ENCODE measurements at regions of chr19 and their contacts with region 1.

Region 1: GRCh38 chr19:42325273-42325895 is at the start of gene MEGF8:
- DNase-seq: peak; percentile 98
- ATAC-seq: peak; percentile 92
- H3K4me3 ChIP-seq: peak within 1 kb of the TSS; percentile 93
- H3K27ac ChIP-seq: peak within 1 kb of the TSS; percentile 57
- H3K4me1 ChIP-seq: peaks cover 7% of the 10 kb centered on the region
- H3K27me3 ChIP-seq: peaks cover 3 to 4% of the 10 kb centered on the region in 2 experiments; a peak in 2 of 4 replicates
- CTCF ChIP-seq: peak; percentile 90 to 97 (median 95); a peak in 5 of 6 replicates
- EP300 ChIP-seq: no peak
- POLR2A ChIP-seq: peak; percentile 85
- RAD21 ChIP-seq: peak; percentile 72
- polyA plus RNA-seq, gene MEGF8: 0.43 to 0.75 TPM

Region 2: DNA sequence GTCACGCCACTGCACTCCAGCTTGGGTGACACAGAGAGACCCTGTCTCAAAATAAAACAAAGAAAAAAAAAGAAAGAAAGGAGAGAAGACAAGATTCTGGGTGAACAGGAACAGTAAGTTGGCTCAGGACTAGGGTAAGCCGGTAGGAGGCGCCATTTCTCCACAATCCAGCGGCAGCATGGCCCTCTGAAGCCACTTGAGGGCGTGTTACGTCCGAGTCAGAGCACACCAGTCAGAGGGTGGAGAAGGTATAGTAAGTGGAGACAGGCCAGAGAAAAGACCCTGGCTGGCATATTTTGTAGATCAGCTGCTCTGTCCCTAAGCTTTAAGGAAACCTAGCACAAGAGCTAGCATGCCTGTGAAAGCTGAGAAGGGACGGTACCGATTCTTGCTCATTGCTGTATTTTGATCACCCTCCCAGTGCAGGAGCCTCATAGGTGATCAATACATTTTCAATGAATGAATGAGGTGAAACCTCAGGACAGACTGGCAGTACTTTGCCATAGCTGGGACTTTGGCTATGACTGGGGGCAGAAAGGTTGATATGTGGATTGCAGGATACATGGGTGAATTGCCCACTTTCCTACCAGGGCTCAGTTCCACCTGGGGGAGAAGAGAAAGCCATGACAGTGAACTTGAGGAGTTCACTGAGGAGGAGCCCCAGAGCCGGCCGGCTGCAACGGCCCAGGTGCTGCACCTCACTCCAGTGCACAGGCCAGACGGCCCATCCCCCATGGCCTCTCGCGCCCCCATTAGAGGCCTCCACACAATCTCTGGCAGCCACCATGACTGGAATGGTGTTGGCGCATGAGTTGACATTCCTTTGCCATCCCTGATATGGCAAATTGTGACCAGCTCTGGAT is 216.6 kb before region 1 on chr19:
- CTCF ChIA-PET with region 1: interaction called, 4 read pairs
- POLR2A ChIA-PET with region 1: no interaction called
- RAD21 ChIA-PET with region 1: no interaction called
- SMC1A ChIA-PET with region 1: interaction called, 3 read pairs
- in situ Hi-C with region 1: no loop called
- intact Hi-C with region 1: loop called (anchors 10 kb)
- DNase-seq: peak; percentile 72
- ATAC-seq: peak; percentile 99
- H3K4me3 ChIP-seq: no peak overlapping the region
- H3K27ac ChIP-seq: no peak overlapping the region
- H3K4me1 ChIP-seq: peaks cover 31% of the 10 kb centered on the region
- H3K27me3 ChIP-seq: no peaks in the 10 kb centered on the region
- CTCF ChIP-seq: peak; percentile 100; a peak in 5 of 6 replicates
- EP300 ChIP-seq: no peak; a peak in 1 of 4 replicates
- POLR2A ChIP-seq: no peak
- RAD21 ChIP-seq: peak; percentile 100

Region 3: DNA sequence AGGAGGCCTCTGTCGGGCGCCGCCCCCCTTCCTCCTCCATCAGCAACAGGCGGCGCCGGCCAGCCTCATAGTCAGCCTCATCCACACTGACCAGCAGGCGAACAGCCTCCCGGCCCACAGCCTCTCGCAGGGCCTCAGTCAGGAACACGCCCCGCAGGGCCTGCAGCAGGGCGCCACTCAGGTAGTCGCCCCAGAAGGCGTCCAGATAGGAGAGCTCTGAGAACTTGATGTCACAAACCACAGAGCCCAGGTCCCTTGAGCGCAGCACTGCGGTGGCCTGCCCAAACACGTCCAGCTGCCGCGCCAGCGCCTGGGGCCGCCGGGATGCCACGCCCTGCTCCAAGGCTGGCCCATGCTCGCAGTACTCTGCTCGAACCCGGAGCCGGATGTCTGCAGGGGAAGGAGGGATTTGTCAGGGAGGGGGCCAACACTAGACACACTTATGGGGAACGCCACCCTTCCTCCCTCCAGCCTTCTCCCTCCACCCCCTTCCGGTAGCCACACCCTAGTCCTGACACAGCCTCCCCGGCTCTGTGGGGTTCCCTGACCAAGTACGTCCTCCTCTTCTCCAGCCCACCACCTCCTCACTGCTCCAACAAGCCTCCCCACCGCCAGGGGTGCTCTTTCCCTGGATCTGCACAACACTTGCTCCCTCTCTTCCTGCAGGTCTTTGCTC is 125.8 kb before region 1 on chr19:
- CTCF ChIA-PET with region 1: no interaction called
- POLR2A ChIA-PET with region 1: no interaction called
- RAD21 ChIA-PET with region 1: no interaction called
- SMC1A ChIA-PET with region 1: no interaction called
- in situ Hi-C with region 1: no loop called
- intact Hi-C with region 1: loop called (anchors 1 kb)
- DNase-seq: peak; percentile 68
- ATAC-seq: peak; percentile 77
- H3K4me3 ChIP-seq: peak overlapping the region; percentile 41
- H3K27ac ChIP-seq: peak overlapping the region; percentile 95
- H3K4me1 ChIP-seq: peaks cover 59% of the 10 kb centered on the region
- H3K27me3 ChIP-seq: no peaks in the 10 kb centered on the region
- CTCF ChIP-seq: peak; percentile 55 to 67 (median 61)
- EP300 ChIP-seq: no peak
- POLR2A ChIP-seq: peak; percentile 74
- RAD21 ChIP-seq: peak; percentile 40

Region 4: DNA sequence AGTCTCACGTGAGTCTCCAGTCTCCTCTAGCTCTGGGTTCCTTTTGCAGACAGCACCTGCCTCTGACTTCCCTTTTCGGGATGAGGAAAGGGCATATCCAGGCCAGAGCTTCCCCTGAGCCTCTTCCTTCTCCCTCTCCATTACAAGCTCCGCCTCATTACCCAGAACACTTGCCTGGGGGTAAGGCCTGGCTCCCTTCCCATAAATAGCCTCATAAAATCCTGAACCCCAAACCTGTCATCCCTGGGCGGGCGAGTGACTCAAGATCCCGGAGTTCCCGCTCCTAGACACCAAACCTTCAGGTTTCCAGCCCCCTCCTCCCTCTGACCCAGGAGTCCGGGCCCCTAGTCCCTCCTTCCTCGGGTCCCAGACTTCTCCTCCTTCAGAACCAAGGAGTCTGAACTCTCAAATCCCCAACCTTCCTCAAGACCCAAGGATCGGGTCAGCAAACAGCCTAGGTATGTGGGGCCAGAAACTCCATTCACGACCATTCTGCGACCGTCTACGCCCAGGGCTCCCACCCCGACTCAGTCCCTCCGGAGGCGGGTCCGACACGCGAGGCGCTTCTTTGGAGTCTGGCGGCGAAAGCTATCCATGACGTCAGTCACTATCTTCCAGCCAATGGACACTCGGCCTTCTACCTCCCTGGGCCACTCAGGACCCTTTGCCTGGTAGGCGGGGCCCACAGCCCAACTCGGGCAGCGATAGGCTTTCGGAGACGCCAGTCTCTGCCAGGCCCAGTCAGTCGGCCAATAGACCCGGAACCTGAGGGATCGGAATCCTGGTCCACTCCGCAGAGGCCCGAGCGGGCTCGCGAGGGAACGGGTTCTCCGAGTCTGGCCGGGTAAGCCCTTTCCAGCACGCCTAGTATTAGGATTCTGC is 71.2 kb after region 1 on chr19:
- CTCF ChIA-PET with region 1: interaction called, 11 read pairs
- POLR2A ChIA-PET with region 1: interaction called, 3 read pairs
- RAD21 ChIA-PET with region 1: interaction called, 3 read pairs
- SMC1A ChIA-PET with region 1: no interaction called
- in situ Hi-C with region 1: no loop called
- intact Hi-C with region 1: loop called (anchors 2 kb)
- DNase-seq: peak; percentile 98
- ATAC-seq: peak; percentile 99
- H3K4me3 ChIP-seq: peak overlapping the region; percentile 97
- H3K27ac ChIP-seq: peak overlapping the region; percentile 80
- H3K4me1 ChIP-seq: peaks cover 8% of the 10 kb centered on the region
- H3K27me3 ChIP-seq: no peaks in the 10 kb centered on the region
- CTCF ChIP-seq: no peak
- EP300 ChIP-seq: no peak
- POLR2A ChIP-seq: peak; percentile 89
- RAD21 ChIP-seq: no peak

Region 5: DNA sequence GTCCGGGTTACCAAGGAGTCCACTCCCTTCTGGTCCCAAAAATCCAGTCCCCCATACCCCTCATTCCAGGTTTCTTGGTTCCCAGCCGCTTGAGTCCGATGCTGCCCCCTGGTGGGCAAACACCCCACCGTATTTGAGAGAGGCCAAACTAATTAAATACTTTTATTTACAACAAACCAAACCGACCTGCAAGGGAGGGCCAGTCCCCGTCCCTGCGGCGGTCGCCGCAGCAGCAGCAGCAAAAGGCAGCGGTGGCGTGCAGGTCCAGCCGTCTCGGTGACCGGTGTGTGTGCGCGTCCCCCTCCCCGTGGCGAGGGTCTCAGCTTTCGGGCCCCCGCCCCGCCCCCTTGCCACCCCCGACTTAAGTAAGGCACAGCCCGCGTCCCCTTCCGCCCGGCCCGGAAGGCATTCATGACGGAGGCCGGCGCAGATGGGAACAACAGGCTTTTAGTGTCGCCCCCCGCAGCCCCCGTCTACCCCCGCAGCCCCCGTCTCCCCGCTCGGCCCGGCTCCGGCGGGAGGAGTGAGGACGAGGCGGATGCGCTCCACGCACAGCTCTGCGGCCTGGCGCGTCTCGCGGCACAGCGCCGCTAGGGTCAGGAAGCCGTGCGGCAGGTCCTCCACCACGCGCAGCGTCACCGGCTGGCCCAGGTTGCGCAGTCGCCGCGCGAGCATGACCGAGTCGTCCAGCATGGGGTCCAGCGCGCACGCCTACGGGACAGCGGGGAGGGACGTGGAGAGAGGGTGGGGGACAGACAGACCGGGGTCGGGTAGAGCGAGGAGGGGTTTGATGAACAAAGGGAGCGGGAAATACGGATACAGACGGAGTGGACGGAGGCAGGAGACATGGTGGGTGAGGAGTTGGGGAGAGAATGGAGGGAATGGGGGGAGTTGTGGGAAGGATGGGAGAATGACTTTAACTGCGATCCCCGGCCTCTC is 76.2 kb after region 1 on chr19:
- CTCF ChIA-PET with region 1: interaction called, 11 read pairs
- POLR2A ChIA-PET with region 1: interaction called, 3 read pairs
- RAD21 ChIA-PET with region 1: interaction called, 3 read pairs
- SMC1A ChIA-PET with region 1: no interaction called
- in situ Hi-C with region 1: no loop called
- intact Hi-C with region 1: loop called (anchors 2 kb)
- DNase-seq: no peak
- ATAC-seq: peak; percentile 69
- H3K4me3 ChIP-seq: peak overlapping the region; percentile 60
- H3K27ac ChIP-seq: no peak overlapping the region
- H3K4me1 ChIP-seq: peaks cover 5% of the 10 kb centered on the region
- H3K27me3 ChIP-seq: no peaks in the 10 kb centered on the region
- CTCF ChIP-seq: peak; percentile 73 to 76 (median 74)
- EP300 ChIP-seq: no peak
- POLR2A ChIP-seq: peak; percentile 72
- RAD21 ChIP-seq: peak; percentile 47

Region 6: DNA sequence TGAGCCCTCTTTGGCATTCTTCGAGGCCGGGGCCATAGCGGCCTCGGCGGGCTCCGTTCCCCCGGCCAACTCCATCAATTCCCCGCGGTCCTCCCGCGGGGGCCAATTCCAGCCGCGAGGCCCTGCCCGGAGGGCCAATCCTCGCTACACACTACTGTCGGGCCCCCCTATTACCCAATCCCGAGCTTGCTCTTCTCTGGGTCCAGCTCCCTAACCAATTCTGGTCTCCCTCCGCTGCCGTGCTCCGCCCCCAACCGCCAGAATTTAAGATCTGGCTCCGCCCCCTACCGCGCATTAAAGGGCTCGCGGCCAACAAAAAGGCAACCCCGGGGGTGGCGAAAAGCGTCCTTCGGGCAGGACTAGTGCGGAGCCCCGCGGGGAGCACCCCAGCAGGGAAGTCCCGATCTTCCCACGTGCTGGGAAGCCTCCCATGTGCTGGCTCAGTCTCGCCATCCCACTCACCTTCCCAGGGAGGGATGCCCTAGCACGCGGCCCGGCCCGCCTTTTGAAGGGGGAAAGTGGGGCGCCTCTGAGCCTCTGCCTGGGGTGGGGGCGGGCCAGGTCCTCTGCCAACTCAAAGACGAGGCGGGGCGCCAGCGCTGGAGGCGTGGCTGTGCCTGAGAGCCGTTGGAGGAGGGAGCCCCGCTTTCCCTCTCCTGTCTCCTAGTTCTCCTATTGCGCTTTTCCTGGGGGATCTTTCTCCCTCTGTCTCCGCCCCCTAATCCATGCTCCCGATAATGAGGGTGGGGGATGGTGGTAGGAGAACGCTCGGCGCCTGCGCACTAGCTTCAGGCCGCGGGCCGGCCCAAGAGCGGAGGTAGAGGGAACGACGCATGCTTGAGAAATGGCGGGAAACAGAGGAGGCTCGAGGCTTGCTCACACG is 98.3 kb after region 1 on chr19:
- CTCF ChIA-PET with region 1: interaction called, 5 read pairs
- POLR2A ChIA-PET with region 1: no interaction called
- RAD21 ChIA-PET with region 1: no interaction called
- SMC1A ChIA-PET with region 1: no interaction called
- in situ Hi-C with region 1: no loop called
- intact Hi-C with region 1: loop called (anchors 5 kb)
- DNase-seq: no peak
- ATAC-seq: peak; percentile 96
- H3K4me3 ChIP-seq: peak overlapping the region; percentile 94
- H3K27ac ChIP-seq: peak overlapping the region; percentile 86
- H3K4me1 ChIP-seq: peaks cover 16% of the 10 kb centered on the region
- H3K27me3 ChIP-seq: no peaks in the 10 kb centered on the region
- CTCF ChIP-seq: no peak
- EP300 ChIP-seq: no peak
- POLR2A ChIP-seq: peak; percentile 69
- RAD21 ChIP-seq: no peak